HEK293T (cell line): ENCODE measurements at regions of chr11 and their contacts with region 1.

Region 1: GRCh38 chr11:9265211-9266131 is at the start of gene DENND5A:
- DNase-seq: peak; percentile 97

Region 2: GRCh38 chr11:9201372-9202162 is 63.9 kb before region 1 on chr11:
- CTCF ChIA-PET with region 1: no interaction called
- POLR2A ChIA-PET with region 1: no interaction called
- DNase-seq: no peak

Region 3: GRCh38 chr11:9280655-9281301 is 15.3 kb after region 1 on chr11:
- CTCF ChIA-PET with region 1: interaction called, 3 read pairs
- POLR2A ChIA-PET with region 1: interaction called, 18 read pairs
- DNase-seq: no peak

Region 4: GRCh38 chr11:9314291-9315036 is 49.0 kb after region 1 on chr11 and contains the start of gene TMEM41B:
- CTCF ChIA-PET with region 1: interaction called, 3 read pairs
- POLR2A ChIA-PET with region 1: interaction called, 10 read pairs
- DNase-seq: peak; percentile 99